Calu3 (cell line): ENCODE measurements at regions of chr3 and their contacts with region 1.

Region 1: DNA sequence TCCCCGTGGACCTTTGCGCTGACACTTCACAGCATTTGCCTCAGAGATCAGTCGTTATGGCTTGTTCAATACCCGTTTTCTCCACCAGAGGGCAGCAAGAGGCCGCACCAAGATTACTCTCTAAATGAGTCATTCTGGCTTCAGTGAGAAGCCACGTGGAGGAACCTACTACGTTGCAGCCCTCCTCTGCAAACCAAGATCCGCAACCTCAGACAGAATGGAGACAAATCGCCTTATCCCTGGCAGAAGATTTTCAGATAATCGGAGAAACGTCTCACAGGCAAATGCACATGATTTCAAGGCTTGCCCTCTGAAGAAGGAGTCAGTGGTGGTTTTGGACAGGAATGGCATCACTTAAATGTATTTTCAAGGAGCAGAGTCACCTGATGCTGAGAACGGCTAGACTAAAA is 60.5 kb downstream of the GTPBP8 start:
- DNase-seq: peak; percentile 80
- H3K4me3 Mint-ChIP-seq: no peak overlapping the region
- H3K27ac Mint-ChIP-seq: no peak overlapping the region
- H3K4me1 Mint-ChIP-seq: no peaks in the 10 kb centered on the region
- H3K27me3 Mint-ChIP-seq: no peaks in the 10 kb centered on the region
- CTCF ChIP-seq: peak; percentile 79

Region 2: GRCh38 chr3:113136071-113136470 is 84.8 kb after region 1 on chr3:
- CTCF ChIA-PET with region 1: interaction called, 3 read pairs
- intact Hi-C with region 1: loop called (anchors 1 kb)
- DNase-seq: no peak
- H3K4me3 Mint-ChIP-seq: no peak overlapping the region
- H3K27ac Mint-ChIP-seq: no peak overlapping the region
- H3K4me1 Mint-ChIP-seq: no peaks in the 10 kb centered on the region
- H3K27me3 Mint-ChIP-seq: no peaks in the 10 kb centered on the region
- CTCF ChIP-seq: peak; percentile 15

Region 3: GRCh38 chr3:113287803-113288648 is 236.7 kb after region 1 on chr3:
- CTCF ChIA-PET with region 1: interaction called, 4 read pairs
- intact Hi-C with region 1: loop called (anchors 1 kb)
- DNase-seq: peak; percentile 62
- H3K4me3 Mint-ChIP-seq: no peak overlapping the region
- H3K27ac Mint-ChIP-seq: no peak overlapping the region
- H3K4me1 Mint-ChIP-seq: peaks cover 14% of the 10 kb centered on the region
- H3K27me3 Mint-ChIP-seq: peaks cover under 1% of the 10 kb centered on the region
- CTCF ChIP-seq: peak; percentile 86

Region 4: DNA sequence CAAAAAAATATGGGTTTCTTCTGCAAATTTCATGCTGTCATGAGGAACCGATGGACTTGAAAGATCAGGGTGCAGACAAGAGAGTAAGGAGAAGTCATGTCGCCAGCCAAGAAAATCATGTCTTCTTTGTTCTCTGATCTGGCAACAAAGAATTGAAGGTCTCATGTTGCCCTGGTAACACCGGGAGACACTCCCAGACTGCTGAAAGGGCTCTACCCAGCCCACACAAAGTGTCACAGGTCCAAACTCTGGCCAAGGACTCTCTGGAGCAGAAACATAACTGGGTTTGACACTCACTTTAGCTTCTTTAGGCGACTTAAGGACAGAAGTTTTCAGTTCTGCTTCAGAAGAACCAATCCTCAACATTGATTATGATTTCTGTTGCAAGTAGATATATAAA is 523.9 kb after region 1 on chr3:
- CTCF ChIA-PET with region 1: no interaction called
- intact Hi-C with region 1: loop called (anchors 1 kb)
- DNase-seq: no peak
- H3K4me3 Mint-ChIP-seq: no peak overlapping the region
- H3K27ac Mint-ChIP-seq: no peak overlapping the region
- H3K4me1 Mint-ChIP-seq: peaks cover 17% of the 10 kb centered on the region
- H3K27me3 Mint-ChIP-seq: peaks cover 47% of the 10 kb centered on the region
- CTCF ChIP-seq: no peak

Region 5: GRCh38 chr3:113626503-113627371 is 575.4 kb after region 1 on chr3:
- CTCF ChIA-PET with region 1: no interaction called
- intact Hi-C with region 1: loop called (anchors 2 kb)
- DNase-seq: peak; percentile 63
- H3K4me3 Mint-ChIP-seq: no peak overlapping the region
- H3K27ac Mint-ChIP-seq: no peak overlapping the region
- H3K4me1 Mint-ChIP-seq: peaks cover 7% of the 10 kb centered on the region
- H3K27me3 Mint-ChIP-seq: peaks cover 8% of the 10 kb centered on the region
- CTCF ChIP-seq: peak; percentile 59